ENCODE measurements at regions of chr7 and their contacts with region 1.

Region 1: DNA sequence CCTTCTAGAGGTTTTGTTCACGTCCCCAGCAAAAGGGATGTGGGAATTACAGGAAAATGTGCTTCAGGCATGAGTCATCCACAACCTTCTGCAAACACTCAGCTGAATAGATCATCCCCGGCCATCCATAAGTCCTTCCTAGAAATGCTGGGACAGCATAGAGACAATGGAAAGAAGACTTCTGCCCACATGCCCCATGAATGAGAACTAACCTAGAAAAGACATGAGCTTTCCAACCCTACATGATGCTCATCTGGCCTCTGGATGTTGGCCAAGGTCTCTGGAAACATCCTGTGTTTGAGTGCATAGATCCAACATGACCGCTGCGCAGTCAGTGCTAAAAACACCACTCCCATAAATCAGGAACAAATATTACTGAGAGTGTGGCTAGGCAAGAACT is 277.5 kb downstream of the PLXNA4 start:
- DNase-seq: no peak
- ATAC-seq: no peak
- H3K4me3 ChIP-seq: no peak overlapping the region
- H3K4me3 Mint-ChIP-seq: no peak overlapping the region
- H3K27ac ChIP-seq: no peak overlapping the region
- H3K27ac Mint-ChIP-seq: no peak overlapping the region
- H3K4me1 ChIP-seq: no peaks in the 10 kb centered on the region
- H3K4me1 Mint-ChIP-seq: no peaks in the 10 kb centered on the region
- H3K27me3 ChIP-seq: no peaks in the 10 kb centered on the region
- H3K27me3 Mint-ChIP-seq: no peaks in the 10 kb centered on the region
- CTCF ChIP-seq: no peak

Region 2: DNA sequence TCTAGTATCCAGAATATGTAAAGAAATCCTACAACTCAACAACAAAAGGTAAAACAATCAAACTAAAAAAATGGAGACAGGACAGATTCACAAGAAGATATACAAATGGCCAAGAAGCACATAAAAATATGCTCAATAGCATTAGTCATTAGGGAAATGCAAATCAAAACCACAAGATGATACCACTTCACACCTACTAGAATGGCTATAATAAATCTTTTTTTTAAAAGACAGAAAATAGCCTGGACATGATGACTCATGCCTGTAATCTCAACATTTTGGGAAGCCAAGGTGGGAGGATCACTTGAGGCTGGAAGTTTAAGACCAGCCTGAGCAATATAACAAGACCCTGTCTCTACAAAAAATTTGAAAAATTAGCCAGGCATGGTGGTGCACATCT is 811.0 kb after region 1 on chr7:
- CTCF ChIA-PET with region 1: no interaction called
- POLR2A ChIA-PET with region 1: no interaction called
- intact Hi-C with region 1: loop called in 1 of 2 experiments (anchors 5 kb)
- DNase-seq: no peak
- ATAC-seq: no peak
- H3K4me3 ChIP-seq: no peak overlapping the region
- H3K4me3 Mint-ChIP-seq: no peak overlapping the region
- H3K27ac ChIP-seq: no peak overlapping the region
- H3K27ac Mint-ChIP-seq: no peak overlapping the region
- H3K4me1 ChIP-seq: no peaks in the 10 kb centered on the region
- H3K4me1 Mint-ChIP-seq: no peaks in the 10 kb centered on the region
- H3K27me3 ChIP-seq: no peaks in the 10 kb centered on the region
- H3K27me3 Mint-ChIP-seq: peaks cover 45% of the 10 kb centered on the region
- CTCF ChIP-seq: no peak